Activated B cell treated with CpG ODN at 0.5 μM for 24 hours (primary cell): ENCODE measurements at regions of chr10 and their contacts with region 1.

Region 1: GRCh38 chr10:11551916-11552602 is 59.4 kb downstream of the USP6NL start:
- DNase-seq: no peak
- ATAC-seq: peak; percentile 55
- H3K4me3 Mint-ChIP-seq: peak overlapping the region; percentile 66
- H3K27ac Mint-ChIP-seq: peak overlapping the region; percentile 87
- H3K4me1 Mint-ChIP-seq: peaks cover 83% of the 10 kb centered on the region
- H3K27me3 Mint-ChIP-seq: no peaks in the 10 kb centered on the region
- CTCF ChIP-seq: no peak

Region 2: GRCh38 chr10:11499425-11500071 is 52.5 kb before region 1 on chr10:
- CTCF ChIA-PET with region 1: no interaction called
- POLR2A ChIA-PET with region 1: no interaction called
- intact Hi-C with region 1: no loop called
- DNase-seq: no peak
- ATAC-seq: no peak
- H3K4me3 Mint-ChIP-seq: no peak overlapping the region
- H3K27ac Mint-ChIP-seq: no peak overlapping the region
- H3K4me1 Mint-ChIP-seq: peaks cover 8% of the 10 kb centered on the region
- H3K27me3 Mint-ChIP-seq: no peaks in the 10 kb centered on the region
- CTCF ChIP-seq: no peak

Region 3: GRCh38 chr10:11533328-11533781 is 18.7 kb before region 1 on chr10:
- CTCF ChIA-PET with region 1: interaction called, 3 read pairs
- POLR2A ChIA-PET with region 1: interaction called, 14 read pairs
- intact Hi-C with region 1: loop called (anchors 1 kb)
- DNase-seq: no peak
- ATAC-seq: no peak
- H3K4me3 Mint-ChIP-seq: peak overlapping the region; percentile 56
- H3K27ac Mint-ChIP-seq: peak overlapping the region; percentile 84
- H3K4me1 Mint-ChIP-seq: peaks cover 92% of the 10 kb centered on the region
- H3K27me3 Mint-ChIP-seq: no peaks in the 10 kb centered on the region
- CTCF ChIP-seq: no peak

Region 4: GRCh38 chr10:11539191-11539868 is 12.7 kb before region 1 on chr10:
- CTCF ChIA-PET with region 1: interaction called, 3 read pairs
- POLR2A ChIA-PET with region 1: interaction called, 14 read pairs
- intact Hi-C with region 1: loop called (anchors 1 kb)
- DNase-seq: no peak
- ATAC-seq: peak; percentile 24
- H3K4me3 Mint-ChIP-seq: peak overlapping the region; percentile 50
- H3K27ac Mint-ChIP-seq: peak overlapping the region; percentile 76
- H3K4me1 Mint-ChIP-seq: peaks cover 81% of the 10 kb centered on the region
- H3K27me3 Mint-ChIP-seq: no peaks in the 10 kb centered on the region
- CTCF ChIP-seq: no peak